Activated CD4-positive, alpha-beta memory T cell treated with anti-CD3 and anti-CD28 coated beads for 36 hours (primary cell): ENCODE measurements at regions of chr11 and their contacts with region 1.

Region 1: DNA sequence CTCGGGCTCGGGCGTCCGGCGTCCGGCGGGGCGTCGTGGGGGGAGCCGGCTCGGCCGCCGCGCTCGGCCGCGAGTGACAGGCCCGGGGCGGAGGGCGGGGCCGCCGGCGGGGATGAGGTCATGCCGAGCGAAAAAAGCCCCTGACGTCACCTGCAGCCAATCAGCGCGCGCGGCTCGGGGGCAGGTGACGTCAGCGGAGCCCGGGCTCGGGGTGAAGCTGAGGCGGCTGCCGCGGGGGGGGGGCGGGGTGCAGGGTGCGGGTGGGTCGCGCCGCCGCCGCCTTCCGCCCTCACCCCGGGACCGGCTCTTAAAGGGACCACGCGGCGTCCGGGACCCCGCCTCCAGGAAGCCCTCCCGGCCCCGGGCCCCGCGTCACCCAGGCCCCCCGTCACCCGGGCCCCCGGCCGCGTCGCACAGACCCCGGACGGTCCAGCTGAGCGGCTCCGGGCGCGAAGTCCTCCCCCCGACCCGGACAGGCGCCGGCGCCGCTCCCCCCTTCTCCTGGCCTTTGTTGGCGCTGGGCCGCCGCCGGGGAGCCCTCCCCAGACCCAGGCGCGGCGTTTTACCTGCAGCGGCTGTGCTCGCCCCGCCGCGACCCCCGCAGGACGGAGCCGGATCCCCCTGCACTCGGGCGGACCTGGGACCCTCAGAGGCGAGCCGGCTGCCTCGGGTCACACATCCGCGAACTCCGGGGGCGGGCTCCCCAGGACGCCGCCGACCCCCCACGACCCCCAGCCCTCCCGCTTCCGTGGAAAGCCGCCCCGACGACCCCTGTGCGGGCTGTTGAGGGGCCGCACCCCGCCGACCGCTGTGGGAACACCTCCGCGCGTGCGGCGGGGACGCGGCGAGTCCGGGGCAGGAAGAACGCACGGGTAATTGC is at the start of gene DUSP8:
- DNase-seq: peak; percentile 93
- H3K4me3 Mint-ChIP-seq: peak within 1 kb of the TSS; percentile 42
- H3K27ac Mint-ChIP-seq: no peak within 1 kb of the TSS
- H3K4me1 Mint-ChIP-seq: peaks cover 16% of the 10 kb centered on the region
- H3K27me3 Mint-ChIP-seq: peaks cover 2% of the 10 kb centered on the region
- total RNA-seq, gene DUSP8: 1.6 to 2.4 TPM

Region 2: GRCh38 chr11:1276041-1276790 is 296.2 kb before region 1 on chr11:
- CTCF ChIA-PET with region 1: no interaction called
- POLR2A ChIA-PET with region 1: no interaction called
- intact Hi-C with region 1: no loop called
- DNase-seq: no peak
- H3K4me3 Mint-ChIP-seq: no peak overlapping the region
- H3K27ac Mint-ChIP-seq: no peak overlapping the region
- H3K4me1 Mint-ChIP-seq: no peaks in the 10 kb centered on the region
- H3K27me3 Mint-ChIP-seq: no peaks in the 10 kb centered on the region

Region 3: GRCh38 chr11:1309498-1310317 is 262.7 kb before region 1 on chr11 and contains the start of gene TOLLIP:
- CTCF ChIA-PET with region 1: interaction called, 5 read pairs
- POLR2A ChIA-PET with region 1: no interaction called
- intact Hi-C with region 1: loop called (anchors 1 kb)
- DNase-seq: peak; percentile 97
- H3K4me3 Mint-ChIP-seq: peak within 1 kb of the TSS; percentile 76
- H3K27ac Mint-ChIP-seq: peak within 1 kb of the TSS; percentile 87
- H3K4me1 Mint-ChIP-seq: peaks cover 37% of the 10 kb centered on the region
- H3K27me3 Mint-ChIP-seq: no peaks in the 10 kb centered on the region
- total RNA-seq, gene TOLLIP: 30.0 to 32.1 TPM

Region 4: GRCh38 chr11:1358286-1358685 is 214.2 kb before region 1 on chr11:
- CTCF ChIA-PET with region 1: no interaction called
- POLR2A ChIA-PET with region 1: no interaction called
- intact Hi-C with region 1: no loop called
- DNase-seq: no peak
- H3K4me3 Mint-ChIP-seq: no peak overlapping the region
- H3K27ac Mint-ChIP-seq: no peak overlapping the region
- H3K4me1 Mint-ChIP-seq: no peaks in the 10 kb centered on the region
- H3K27me3 Mint-ChIP-seq: peaks cover 11% of the 10 kb centered on the region

Region 5: GRCh38 chr11:1515082-1516060 is 57.1 kb before region 1 on chr11:
- CTCF ChIA-PET with region 1: interaction called, 11 read pairs
- POLR2A ChIA-PET with region 1: no interaction called
- intact Hi-C with region 1: no loop called
- DNase-seq: peak; percentile 83
- H3K4me3 Mint-ChIP-seq: no peak overlapping the region
- H3K27ac Mint-ChIP-seq: no peak overlapping the region
- H3K4me1 Mint-ChIP-seq: peaks cover 60% of the 10 kb centered on the region
- H3K27me3 Mint-ChIP-seq: no peaks in the 10 kb centered on the region

Region 6: GRCh38 chr11:1546536-1547400 is 25.7 kb before region 1 on chr11:
- CTCF ChIA-PET with region 1: interaction called, 113 read pairs
- POLR2A ChIA-PET with region 1: interaction called, 4 read pairs
- intact Hi-C with region 1: loop called (anchors 1 kb)
- DNase-seq: peak; percentile 52
- H3K4me3 Mint-ChIP-seq: no peak overlapping the region
- H3K27ac Mint-ChIP-seq: no peak overlapping the region
- H3K4me1 Mint-ChIP-seq: peaks cover 7% of the 10 kb centered on the region
- H3K27me3 Mint-ChIP-seq: peaks cover 22% of the 10 kb centered on the region

Region 7: DNA sequence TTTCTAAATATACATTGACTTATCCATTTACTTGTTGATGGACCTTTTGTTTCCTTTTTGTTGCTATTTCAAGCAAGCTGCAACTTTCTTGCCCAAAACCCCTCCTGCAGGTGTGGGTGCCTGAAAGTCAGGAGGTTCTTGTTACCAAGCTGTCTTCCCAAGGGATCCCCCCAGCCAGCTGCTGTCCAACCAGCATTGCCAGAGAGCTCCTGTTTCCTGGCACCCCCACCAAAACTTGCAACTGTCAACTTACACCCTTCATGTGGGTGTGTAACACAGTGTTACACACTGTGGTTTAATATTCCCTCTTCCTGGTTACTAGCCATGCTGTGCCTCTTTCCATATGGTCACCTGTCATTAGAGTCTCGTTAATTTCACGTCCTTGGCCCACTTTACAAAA is 14.3 kb after region 1 on chr11:
- CTCF ChIA-PET with region 1: interaction called, 32 read pairs
- POLR2A ChIA-PET with region 1: interaction called, 4 read pairs
- intact Hi-C with region 1: no loop called
- DNase-seq: no peak
- H3K4me3 Mint-ChIP-seq: no peak overlapping the region
- H3K27ac Mint-ChIP-seq: no peak overlapping the region
- H3K4me1 Mint-ChIP-seq: peaks cover 21% of the 10 kb centered on the region
- H3K27me3 Mint-ChIP-seq: peaks cover 2% of the 10 kb centered on the region